ENCODE measurements at regions of chr11 and their contacts with region 1.

Region 1: GRCh38 chr11:128824191-128825049 is 42.7 kb downstream of the KCNJ1 start:
- DNase-seq: no peak
- H3K4me3 ChIP-seq: peak overlapping the region in 3 of 4 donors; percentile 28 to 37 (median 29)
- H3K27ac ChIP-seq: no peak overlapping the region
- H3K4me1 ChIP-seq: peaks cover 6 to 9% (median 7%) of the 10 kb centered on the region in 4 donors
- H3K27me3 ChIP-seq: peaks cover 0 to 29% (median 2%) of the 10 kb centered on the region in 4 donors
- CTCF ChIP-seq: no peak
- EP300 ChIP-seq: no peak
- POLR2A ChIP-seq: no peak

Region 2: GRCh38 chr11:128686745-128687177 is 137.7 kb before region 1 on chr11:
- intact Hi-C with region 1: loop called (anchors 5 kb)
- DNase-seq: no peak
- H3K4me3 ChIP-seq: peak overlapping the region; percentile 37 to 55 (median 45)
- H3K27ac ChIP-seq: no peak overlapping the region
- H3K4me1 ChIP-seq: peaks cover 37 to 61% (median 53%) of the 10 kb centered on the region in 4 donors
- H3K27me3 ChIP-seq: peaks cover 4 to 91% (median 50%) of the 10 kb centered on the region in 4 donors
- CTCF ChIP-seq: no peak
- EP300 ChIP-seq: no peak
- POLR2A ChIP-seq: no peak

Region 3: GRCh38 chr11:128884703-128885338 is 60.4 kb after region 1 on chr11:
- intact Hi-C with region 1: no loop called
- DNase-seq: no peak
- H3K4me3 ChIP-seq: no peak overlapping the region
- H3K27ac ChIP-seq: no peak overlapping the region
- H3K4me1 ChIP-seq: peaks cover 0 to under 1% (median 0%) of the 10 kb centered on the region in 4 donors
- H3K27me3 ChIP-seq: peaks cover 0 to 48% (median 2%) of the 10 kb centered on the region in 4 donors
- CTCF ChIP-seq: peak; percentile 86 to 87 (median 86)
- EP300 ChIP-seq: no peak
- POLR2A ChIP-seq: no peak

Region 4: DNA sequence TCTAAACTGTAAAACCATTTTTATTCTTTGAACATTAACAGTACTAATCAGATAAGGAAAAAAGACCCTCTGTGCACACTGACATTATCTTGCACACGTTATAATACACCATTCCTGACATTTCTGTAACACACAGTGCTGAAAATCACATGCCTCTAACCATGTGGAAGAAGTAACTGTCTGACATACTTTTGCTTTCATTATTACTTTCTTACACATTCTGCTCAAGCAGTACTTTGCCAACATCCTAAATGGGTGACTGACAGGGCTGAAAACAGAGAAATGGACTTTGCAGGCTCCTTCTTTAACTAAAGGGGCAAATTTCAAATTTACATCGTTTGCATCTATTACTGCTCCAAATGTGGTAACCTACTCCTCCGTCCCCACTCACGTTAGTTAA is 141.1 kb after region 1 on chr11:
- intact Hi-C with region 1: no loop called
- DNase-seq: no peak
- H3K4me3 ChIP-seq: no peak overlapping the region
- H3K27ac ChIP-seq: no peak overlapping the region
- H3K4me1 ChIP-seq: no peaks in the 10 kb centered on the region
- H3K27me3 ChIP-seq: no peaks in the 10 kb centered on the region
- CTCF ChIP-seq: no peak
- EP300 ChIP-seq: no peak
- POLR2A ChIP-seq: no peak

Measured in esophagus muscularis mucosa (tissue), 4 donors.